MCF 10A (cell line): ENCODE measurements at regions of chr14 and their contacts with region 1.

Region 1: GRCh38 chr14:103361868-103362267 is 23.3 kb upstream of the MARK3 start:
- DNase-seq: peak; percentile 96
- H3K4me3 Mint-ChIP-seq: peak overlapping the region; percentile 54
- H3K27ac Mint-ChIP-seq: peak overlapping the region; percentile 96
- H3K4me1 Mint-ChIP-seq: peaks cover 9% of the 10 kb centered on the region
- H3K27me3 Mint-ChIP-seq: no peaks in the 10 kb centered on the region
- CTCF ChIP-seq: no peak

Region 2: DNA sequence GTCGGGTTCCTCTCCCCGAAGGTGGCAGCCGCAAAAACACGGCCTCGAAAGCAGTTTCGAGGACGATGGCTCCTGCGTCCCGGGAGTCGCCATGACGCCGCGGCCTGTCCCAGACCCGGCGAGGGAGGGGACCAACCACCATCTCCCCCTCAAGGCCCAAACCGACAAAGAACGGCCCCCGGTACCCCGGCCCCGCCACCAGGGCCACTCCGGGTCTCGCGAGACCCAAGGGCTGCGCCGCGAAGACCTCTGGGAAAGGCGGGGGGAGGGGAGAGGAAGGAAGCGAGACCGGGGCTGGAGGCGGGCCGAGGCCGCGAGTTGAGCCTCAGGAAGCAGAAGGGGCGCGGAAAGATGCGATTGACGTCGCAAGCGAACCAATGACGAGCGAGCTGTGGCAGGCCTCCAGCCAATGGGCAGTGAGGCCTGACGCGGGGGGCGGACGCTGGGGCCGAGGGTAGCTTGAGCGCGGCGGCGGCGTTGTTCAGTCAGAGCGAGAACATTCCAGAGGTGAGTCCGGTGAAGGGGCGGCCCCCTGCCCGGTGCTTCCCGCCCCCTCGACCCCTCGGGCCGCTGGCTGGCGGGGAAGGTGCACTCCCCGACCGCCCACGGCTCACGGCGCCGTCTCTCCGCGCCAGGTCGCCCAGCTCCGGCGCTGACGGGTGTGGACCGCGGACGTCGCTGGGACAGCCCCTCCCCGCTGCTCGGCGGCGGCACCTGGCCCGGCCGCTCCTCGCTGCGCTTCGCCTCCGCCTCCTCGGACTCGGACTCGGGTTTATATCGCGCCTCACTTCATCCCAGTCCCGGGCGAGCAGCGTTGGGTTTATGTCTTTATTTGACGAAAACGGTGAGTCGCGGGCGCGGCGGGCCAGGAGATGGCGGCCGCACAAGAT is 27.9 kb before region 1 on chr14 and contains the start of gene EIF5:
- CTCF ChIA-PET with region 1: no interaction called
- POLR2A ChIA-PET with region 1: interaction called, 17 read pairs
- intact Hi-C with region 1: no loop called
- DNase-seq: peak; percentile 98
- H3K4me3 Mint-ChIP-seq: peak within 1 kb of the TSS; percentile 89
- H3K27ac Mint-ChIP-seq: peak within 1 kb of the TSS; percentile 97
- H3K4me1 Mint-ChIP-seq: peaks cover 15% of the 10 kb centered on the region
- H3K27me3 Mint-ChIP-seq: no peaks in the 10 kb centered on the region
- CTCF ChIP-seq: peak; percentile 13
- total RNA-seq, gene EIF5: 149 and 327 TPM in 2 replicates

Region 3: GRCh38 chr14:103346286-103346685 is 15.6 kb before region 1 on chr14:
- CTCF ChIA-PET with region 1: interaction called, 4 read pairs
- POLR2A ChIA-PET with region 1: interaction called, 35 read pairs
- intact Hi-C with region 1: no loop called
- DNase-seq: no peak
- H3K4me3 Mint-ChIP-seq: no peak overlapping the region
- H3K27ac Mint-ChIP-seq: no peak overlapping the region
- H3K4me1 Mint-ChIP-seq: no peaks in the 10 kb centered on the region
- H3K27me3 Mint-ChIP-seq: no peaks in the 10 kb centered on the region
- CTCF ChIP-seq: no peak

Region 4: GRCh38 chr14:103372603-103373304 is 10.9 kb after region 1 on chr14:
- CTCF ChIA-PET with region 1: interaction called, 3 read pairs
- POLR2A ChIA-PET with region 1: interaction called, 13 read pairs
- intact Hi-C with region 1: no loop called
- DNase-seq: peak; percentile 91
- H3K4me3 Mint-ChIP-seq: peak overlapping the region; percentile 4
- H3K27ac Mint-ChIP-seq: peak overlapping the region; percentile 64
- H3K4me1 Mint-ChIP-seq: peaks cover 10% of the 10 kb centered on the region
- H3K27me3 Mint-ChIP-seq: no peaks in the 10 kb centered on the region
- CTCF ChIP-seq: no peak

Region 5: GRCh38 chr14:103385152-103385993 is 23.5 kb after region 1 on chr14 and contains the start of gene MARK3:
- CTCF ChIA-PET with region 1: interaction called, 9 read pairs
- POLR2A ChIA-PET with region 1: interaction called, 16 read pairs
- intact Hi-C with region 1: no loop called
- DNase-seq: peak; percentile 95
- H3K4me3 Mint-ChIP-seq: peak within 1 kb of the TSS; percentile 91
- H3K27ac Mint-ChIP-seq: peak within 1 kb of the TSS; percentile 87
- H3K4me1 Mint-ChIP-seq: peaks cover 24% of the 10 kb centered on the region
- H3K27me3 Mint-ChIP-seq: no peaks in the 10 kb centered on the region
- CTCF ChIP-seq: no peak
- total RNA-seq, gene MARK3: 102 and 130 TPM in 2 replicates